Kidney (tissue), 22 donors: ENCODE measurements at regions of chr7 and their contacts with region 1.

Region 1: DNA sequence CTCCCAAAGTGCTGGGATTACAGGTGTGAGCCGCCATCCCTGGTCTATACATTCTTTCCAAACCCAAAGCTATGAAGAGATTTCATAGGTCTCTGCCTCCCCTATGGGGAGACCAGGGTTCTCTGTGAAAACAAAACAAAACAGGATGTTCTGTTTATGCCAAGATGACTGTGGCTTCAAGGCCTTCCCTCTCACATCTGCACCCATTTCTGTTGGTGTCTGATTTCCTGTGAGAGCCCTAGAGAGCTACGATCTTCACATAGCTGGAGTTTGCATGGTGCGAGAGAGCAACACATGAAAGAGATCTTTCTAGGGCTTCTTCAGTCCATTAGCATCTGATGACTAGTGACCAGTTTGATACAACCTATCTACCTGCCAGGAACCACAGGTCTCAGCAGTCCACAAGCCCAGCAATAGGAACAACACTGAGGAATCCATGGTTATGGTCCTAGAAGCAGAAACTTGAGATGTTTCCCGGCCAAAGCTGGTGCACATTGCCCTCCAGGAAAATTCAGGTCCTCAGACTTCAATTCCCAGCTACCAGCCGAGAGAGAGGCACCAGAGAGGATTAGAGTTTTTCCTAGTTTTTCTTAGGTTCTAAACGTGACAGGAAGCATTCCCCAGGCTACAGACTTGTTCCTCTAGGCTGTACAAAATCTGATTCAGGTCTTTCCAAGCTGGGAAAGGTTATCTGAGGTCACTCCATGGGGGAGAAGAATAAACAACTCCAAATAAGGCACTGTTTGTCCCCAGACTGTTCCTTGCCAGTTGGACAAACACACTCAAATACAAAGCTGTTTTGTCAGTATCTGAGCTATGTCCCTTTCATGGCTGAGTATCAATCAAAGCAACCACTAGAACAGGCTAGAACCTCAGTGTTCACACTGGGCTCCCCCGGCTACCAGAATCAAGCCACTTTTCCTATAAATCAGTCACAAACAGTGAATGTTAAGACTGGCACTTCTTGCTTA is 259.7 kb downstream of the CALN1 start:
- DNase-seq: peak in 2 of 5 donors; percentile 6 to 47
- H3K4me3 ChIP-seq: no peak overlapping the region
- H3K27ac ChIP-seq: no peak overlapping the region
- H3K4me1 ChIP-seq: no peaks in the 10 kb centered on the region
- H3K27me3 ChIP-seq: no peaks in the 10 kb centered on the region
- CTCF ChIP-seq: no peak

Region 2: DNA sequence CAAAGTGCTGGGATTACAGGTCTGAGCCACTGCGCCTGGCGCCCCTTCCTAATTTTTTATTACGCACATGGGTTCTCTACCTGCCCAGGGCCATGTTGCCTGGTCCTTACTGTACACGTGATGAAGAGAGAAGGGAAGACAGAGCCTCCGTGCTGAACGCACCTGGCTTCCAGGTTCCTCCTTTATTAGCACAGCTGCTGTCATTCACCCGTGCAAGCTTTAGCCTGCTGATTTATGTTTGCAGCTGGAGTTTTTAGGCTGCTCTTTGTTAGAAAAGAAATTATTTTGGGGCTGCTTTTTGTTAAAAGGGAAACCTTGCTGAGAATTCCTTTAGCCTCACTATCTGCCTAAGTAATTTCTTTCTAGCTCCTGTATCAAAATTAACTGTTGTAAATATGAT is 157.3 kb before region 1 on chr7:
- intact Hi-C with region 1: no loop called
- DNase-seq: peak in 1 of 5 donors; percentile 22
- H3K4me3 ChIP-seq: no peak overlapping the region
- H3K27ac ChIP-seq: no peak overlapping the region
- H3K4me1 ChIP-seq: no peaks in the 10 kb centered on the region
- H3K27me3 ChIP-seq: no peaks in the 10 kb centered on the region
- CTCF ChIP-seq: no peak

Region 3: DNA sequence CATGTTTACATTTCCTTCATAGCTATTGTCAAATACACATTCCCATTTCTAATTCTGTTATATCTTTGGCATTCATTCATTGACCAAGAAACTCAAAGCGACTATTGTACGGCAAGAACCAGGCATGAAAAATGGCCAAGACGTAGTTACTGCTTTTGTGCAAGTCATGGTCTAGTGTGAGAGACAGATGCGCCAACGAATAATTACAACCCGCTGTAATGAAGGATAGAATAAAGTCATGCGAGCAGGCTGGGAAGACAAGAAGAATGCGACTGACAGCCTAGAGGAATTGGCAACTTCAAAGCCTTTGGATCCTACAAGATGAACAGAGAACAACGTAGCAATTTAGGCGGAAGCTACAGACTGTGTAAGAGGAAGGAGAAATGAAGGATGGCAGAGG is 38.5 kb after region 1 on chr7:
- intact Hi-C with region 1: loop called (anchors 5 kb)
- DNase-seq: no peak
- H3K4me3 ChIP-seq: no peak overlapping the region
- H3K27ac ChIP-seq: no peak overlapping the region
- H3K4me1 ChIP-seq: no peaks in the 10 kb centered on the region
- H3K27me3 ChIP-seq: no peaks in the 10 kb centered on the region
- CTCF ChIP-seq: no peak